Lower lobe of right lung (tissue), 2 donors: ENCODE measurements at regions of chr11 and their contacts with region 1.

Region 1: GRCh38 chr11:44621140-44621681 is 55.7 kb downstream of the CD82 start:
- DNase-seq: peak; percentile 81
- ATAC-seq: peak; percentile 81 to 85
- H3K4me3 ChIP-seq: no peak overlapping the region
- H3K27ac ChIP-seq: no peak overlapping the region
- H3K4me1 ChIP-seq: peaks cover 24% of the 10 kb centered on the region
- H3K27me3 ChIP-seq: no peaks in the 10 kb centered on the region
- CTCF ChIP-seq: peak; percentile 96

Region 2: GRCh38 chr11:44680982-44681597 is 59.9 kb after region 1 on chr11:
- intact Hi-C with region 1: no loop called
- DNase-seq: no peak
- ATAC-seq: peak in 1 of 2 donors; percentile 41
- H3K4me3 ChIP-seq: no peak overlapping the region
- H3K27ac ChIP-seq: no peak overlapping the region
- H3K4me1 ChIP-seq: no peaks in the 10 kb centered on the region
- H3K27me3 ChIP-seq: no peaks in the 10 kb centered on the region
- CTCF ChIP-seq: no peak

Region 3: GRCh38 chr11:44711108-44711786 is 90.0 kb after region 1 on chr11:
- intact Hi-C with region 1: no loop called
- DNase-seq: no peak
- ATAC-seq: no peak
- H3K4me3 ChIP-seq: no peak overlapping the region
- H3K27ac ChIP-seq: no peak overlapping the region
- H3K4me1 ChIP-seq: no peaks in the 10 kb centered on the region
- H3K27me3 ChIP-seq: no peaks in the 10 kb centered on the region
- CTCF ChIP-seq: no peak

Region 4: GRCh38 chr11:44899959-44900358 is 278.7 kb after region 1 on chr11:
- intact Hi-C with region 1: loop called (anchors 10 kb)
- DNase-seq: no peak
- ATAC-seq: no peak
- H3K4me3 ChIP-seq: no peak overlapping the region
- H3K27ac ChIP-seq: no peak overlapping the region
- H3K4me1 ChIP-seq: no peaks in the 10 kb centered on the region
- H3K27me3 ChIP-seq: no peaks in the 10 kb centered on the region
- CTCF ChIP-seq: no peak